ENCODE measurements at regions of chr4 and their contacts with region 1.

Region 1: GRCh38 chr4:48141048-48141447 is 7.0 kb upstream of the TXK start:
- DNase-seq: peak; percentile 56
- ATAC-seq: peak; percentile 84
- H3K4me3 ChIP-seq: no peak overlapping the region
- H3K27ac ChIP-seq: no peak overlapping the region
- H3K4me1 ChIP-seq: no peaks in the 10 kb centered on the region
- H3K27me3 ChIP-seq: no peaks in the 10 kb centered on the region
- CTCF ChIP-seq: peak; percentile 65
- POLR2A ChIP-seq: no peak
- RAD21 ChIP-seq: peak; percentile 63

Region 2: DNA sequence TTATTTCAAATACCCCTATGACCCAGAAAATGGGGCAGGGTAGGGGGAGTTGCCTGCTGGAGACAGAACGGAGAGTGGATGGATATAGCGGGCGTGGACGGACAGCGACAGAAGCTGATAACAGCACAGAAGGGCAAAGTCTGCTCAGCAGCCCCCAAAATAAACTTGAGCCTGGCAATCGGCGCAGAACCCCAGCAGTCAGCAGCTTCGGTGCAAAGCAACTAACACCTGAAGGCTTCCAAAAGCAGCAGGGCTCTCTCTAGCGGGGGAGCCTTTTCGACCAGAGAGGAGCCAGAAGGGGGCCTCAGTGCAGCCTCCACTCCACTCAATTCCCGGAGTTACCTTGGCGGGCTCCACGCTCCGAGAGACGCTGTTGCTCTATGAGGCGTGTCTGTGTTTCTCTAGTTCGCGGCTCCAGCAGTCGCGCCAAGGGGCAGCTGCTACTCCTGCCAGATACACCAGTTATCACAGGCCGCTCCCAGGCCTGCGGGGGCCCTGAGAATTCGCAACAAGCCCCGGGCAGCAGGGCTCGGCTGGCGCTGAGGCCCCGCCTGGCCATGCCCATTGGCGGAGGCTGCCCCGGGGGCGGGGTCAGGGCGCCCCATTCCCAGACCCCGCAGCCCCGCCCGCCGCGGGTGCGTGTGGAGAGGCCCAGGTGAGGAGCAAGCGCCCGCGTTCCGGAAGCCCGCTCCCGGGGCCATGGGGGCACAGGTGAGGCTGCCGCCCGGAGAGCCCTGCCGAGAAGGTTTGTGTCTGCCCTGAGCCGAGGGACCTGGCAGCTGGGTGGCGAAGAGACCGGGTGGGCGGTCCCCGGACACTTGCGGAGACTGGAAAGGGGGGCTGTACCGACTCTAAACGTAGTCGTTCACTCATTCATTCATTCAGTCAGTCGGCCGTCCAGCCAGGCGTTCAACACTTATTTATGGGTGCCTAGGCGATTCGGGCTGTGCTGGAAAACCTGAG is 124.6 kb before region 1 on chr4 and contains the starts of genes CNGA1 and NIPAL1:
- CTCF ChIA-PET with region 1: no interaction called
- POLR2A ChIA-PET with region 1: no interaction called
- dilution Hi-C with region 1: no loop called
- in situ Hi-C with region 1: no loop called
- intact Hi-C with region 1: loop called (anchors 5 kb)
- DNase-seq: peak; percentile 23
- ATAC-seq: peak; percentile 97
- H3K4me3 ChIP-seq: peak within 1 kb of the TSS; percentile 44
- H3K27ac ChIP-seq: no peak within 1 kb of the TSS
- H3K4me1 ChIP-seq: no peaks in the 10 kb centered on the region
- H3K27me3 ChIP-seq: peaks cover 12% of the 10 kb centered on the region
- CTCF ChIP-seq: peak; percentile 28
- POLR2A ChIP-seq: no peak
- RAD21 ChIP-seq: 0 out of 2 replicates have a peak, but pooled peaks have one; percentile 8
- total RNA-seq, gene CNGA1: not detected in 2 replicates
- total RNA-seq, gene NIPAL1: 1.1 TPM in 2 replicates

Measured in IMR-90 (cell line).